RWPE1 (cell line): ENCODE measurements at regions of chr1 and their contacts with region 1.

Region 1: DNA sequence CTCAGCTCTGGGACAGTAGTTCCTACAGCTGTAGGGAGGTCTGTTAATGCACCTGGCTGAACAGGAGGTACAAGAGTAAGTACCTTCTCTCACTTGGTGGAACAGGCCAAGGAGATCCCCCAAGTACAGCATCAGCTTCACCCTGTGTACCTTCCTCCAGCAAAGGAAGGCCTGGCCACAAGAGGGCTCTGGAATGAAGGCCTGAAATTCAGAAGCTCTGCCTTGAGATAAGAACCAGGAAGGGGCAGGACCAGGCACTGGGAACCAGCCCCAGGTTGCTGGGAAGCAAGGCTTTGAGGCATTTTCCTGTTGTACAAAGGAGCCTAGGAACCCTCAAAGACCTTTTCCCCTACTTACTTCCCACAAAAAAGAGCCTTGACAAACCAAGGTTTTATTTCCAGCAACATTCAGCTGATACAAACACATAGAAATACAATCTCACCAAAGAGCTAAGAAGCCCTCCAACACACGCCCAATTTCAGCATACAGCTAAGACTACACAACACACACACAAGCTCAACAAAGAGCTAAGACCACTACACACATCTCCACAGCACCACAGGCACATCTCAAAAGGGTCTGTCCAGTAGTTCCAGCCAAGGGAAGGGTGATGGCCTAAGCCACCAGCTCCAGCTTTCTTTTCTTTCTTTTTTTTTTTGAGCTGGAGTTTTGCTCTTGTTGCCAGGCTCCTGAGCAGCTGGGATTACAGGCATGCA is 23.5 kb downstream of the F11R start:
- DNase-seq: peak; percentile 57
- H3K27ac ChIP-seq: peak overlapping the region; percentile 33; the same call in 1 of the 2 replicates
- CTCF ChIP-seq: peak; percentile 67

Region 2: GRCh38 chr1:160519642-160520435 is 477.6 kb before region 1 on chr1:
- CTCF ChIA-PET with region 1: no interaction called
- POLR2A ChIA-PET with region 1: no interaction called
- DNase-seq: peak; percentile 20
- H3K27ac ChIP-seq: no peak overlapping the region
- CTCF ChIP-seq: no peak

Region 3: GRCh38 chr1:161021165-161021960 is 23.9 kb after region 1 on chr1:
- CTCF ChIA-PET with region 1: interaction called, 12 read pairs
- POLR2A ChIA-PET with region 1: interaction called, 5 read pairs
- DNase-seq: peak; percentile 99
- H3K27ac ChIP-seq: peak overlapping the region; percentile 94
- CTCF ChIP-seq: no peak

Region 4: DNA sequence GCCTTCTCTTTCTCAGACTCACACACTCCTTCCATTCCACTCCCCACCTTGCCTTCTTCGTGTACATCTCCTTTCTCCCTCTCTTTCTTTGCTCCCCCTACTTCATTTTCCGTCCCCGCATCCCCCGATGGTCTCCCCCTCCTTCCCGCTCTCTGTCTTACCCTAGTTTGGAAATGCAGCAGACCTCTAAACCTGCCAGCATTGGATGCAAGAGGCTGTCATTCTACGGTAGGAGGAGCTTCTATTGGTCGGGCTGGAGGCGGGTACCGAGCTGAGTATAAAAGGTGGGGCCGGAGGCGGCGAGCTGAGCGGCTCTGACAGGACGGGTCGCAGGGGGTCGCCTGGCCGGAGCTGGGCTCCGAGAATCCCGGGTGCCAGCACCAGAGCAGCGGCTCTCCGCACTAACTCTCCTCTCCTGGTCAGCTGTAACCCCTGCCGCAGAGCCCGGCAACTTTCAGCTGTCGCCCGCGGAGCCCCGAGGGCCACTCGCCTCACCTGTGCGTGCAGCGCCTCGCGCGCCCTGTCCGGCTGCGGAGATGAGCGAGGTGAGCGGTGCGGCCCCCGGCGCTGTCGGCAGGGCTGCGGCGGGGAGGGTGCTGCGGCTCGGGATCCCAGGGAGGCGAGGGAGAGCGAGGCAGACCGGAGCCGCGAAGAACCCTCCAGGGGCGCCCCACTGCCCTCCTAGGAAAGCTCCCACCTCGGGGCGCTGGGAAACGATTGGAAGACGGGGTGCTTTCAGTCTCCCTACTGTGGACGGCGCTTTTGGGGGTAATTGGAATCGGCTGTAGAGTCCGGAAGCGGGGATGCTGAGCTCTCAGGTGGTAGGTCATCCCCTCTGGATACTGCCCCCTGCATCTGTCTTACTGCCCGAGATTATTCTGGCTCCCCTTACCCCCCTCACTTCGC is 261.2 kb after region 1 on chr1 and contains the start of gene PCP4L1:
- CTCF ChIA-PET with region 1: no interaction called
- POLR2A ChIA-PET with region 1: no interaction called
- DNase-seq: peak; percentile 51
- H3K27ac ChIP-seq: no peak within 1 kb of the TSS
- CTCF ChIP-seq: no peak